ENCODE measurements at regions of chr3 and their contacts with region 1.

Region 1: DNA sequence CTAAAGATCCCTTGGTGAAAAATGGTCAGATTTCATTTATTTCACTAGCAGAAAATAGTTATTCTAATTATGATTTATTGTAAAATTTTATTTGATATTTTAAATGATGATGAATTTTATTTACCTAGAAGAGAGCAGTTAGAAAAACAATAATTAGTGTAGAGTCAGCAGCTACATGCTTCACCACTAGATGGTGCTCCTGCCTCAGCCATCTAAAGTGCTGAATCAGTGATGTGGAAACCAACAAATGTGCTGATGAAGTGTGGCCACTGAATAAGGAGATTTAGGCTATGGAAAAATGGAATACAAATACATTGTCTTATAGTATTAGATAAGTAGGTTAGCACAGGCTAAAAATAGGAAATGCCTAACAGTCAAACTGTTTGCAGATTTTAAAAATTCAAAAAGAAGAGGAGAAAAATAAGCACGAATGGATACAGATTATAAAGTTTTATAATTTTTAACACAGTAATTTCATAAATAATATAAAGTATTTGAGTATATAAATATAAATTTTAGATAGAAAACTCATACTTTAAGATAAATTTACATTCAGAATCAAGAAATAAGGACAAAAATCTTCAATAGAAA is 109.8 kb downstream of the PPP2R3A start:
- DNase-seq: peak; percentile 38 to 73 (median 65)
- ATAC-seq: peak; percentile 88
- H3K4me3 ChIP-seq: no peak overlapping the region
- H3K4me3 Mint-ChIP-seq: no peak overlapping the region
- H3K27ac ChIP-seq: no peak overlapping the region
- H3K27ac Mint-ChIP-seq: peak overlapping the region in 1 of 9 donors; percentile 28
- H3K4me1 ChIP-seq: no peaks in the 10 kb centered on the region
- H3K4me1 Mint-ChIP-seq: peaks cover 0 to 5% (median 4%) of the 10 kb centered on the region in 7 donors
- H3K27me3 ChIP-seq: no peaks in the 10 kb centered on the region
- H3K27me3 Mint-ChIP-seq: peaks cover 0 to 6% (median 0%) of the 10 kb centered on the region in 5 donors

Region 2: GRCh38 chr3:136162322-136162721 is 87.0 kb after region 1 on chr3:
- CTCF ChIA-PET with region 1: no interaction called
- POLR2A ChIA-PET with region 1: no interaction called
- intact Hi-C with region 1: no loop called
- DNase-seq: no peak
- ATAC-seq: no peak
- H3K4me3 ChIP-seq: no peak overlapping the region
- H3K4me3 Mint-ChIP-seq: peak overlapping the region in 1 of 10 donors; percentile 75
- H3K27ac ChIP-seq: no peak overlapping the region
- H3K27ac Mint-ChIP-seq: peak overlapping the region in 2 of 9 donors; percentile 51 to 60
- H3K4me1 ChIP-seq: peaks cover 35 to 38% of the 10 kb centered on the region in 2 donors
- H3K4me1 Mint-ChIP-seq: peaks cover 35 to 89% (median 78%) of the 10 kb centered on the region in 7 donors
- H3K27me3 ChIP-seq: no peaks in the 10 kb centered on the region
- H3K27me3 Mint-ChIP-seq: no peaks in the 10 kb centered on the region

Region 3: DNA sequence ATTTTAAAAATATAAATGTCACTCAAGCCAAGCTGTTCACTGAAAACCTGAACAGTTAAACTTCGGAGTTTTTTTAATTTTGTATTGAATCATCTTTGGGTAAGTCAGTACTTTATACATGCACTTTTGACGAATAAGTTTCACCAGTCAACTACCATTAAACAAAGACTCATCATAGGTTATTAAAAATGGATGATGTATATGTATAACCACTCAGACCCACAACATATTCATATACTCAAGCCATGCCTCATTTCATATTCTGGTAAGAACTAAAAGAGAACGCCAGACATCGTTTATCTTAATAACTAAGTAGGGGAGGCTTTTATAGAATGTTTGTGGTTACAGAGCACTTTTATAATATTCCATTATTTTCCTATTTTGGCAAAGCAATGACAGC is 102.6 kb after region 1 on chr3:
- CTCF ChIA-PET with region 1: interaction called, 3 read pairs
- POLR2A ChIA-PET with region 1: no interaction called
- intact Hi-C with region 1: loop called in 1 of 2 experiments (anchors 5 kb)
- DNase-seq: no peak
- ATAC-seq: no peak
- H3K4me3 ChIP-seq: no peak overlapping the region
- H3K4me3 Mint-ChIP-seq: peak overlapping the region in 5 of 10 donors; percentile 13 to 76 (median 53)
- H3K27ac ChIP-seq: no peak overlapping the region
- H3K27ac Mint-ChIP-seq: peak overlapping the region in 2 of 9 donors; percentile 14 to 24
- H3K4me1 ChIP-seq: peaks cover 47 to 68% of the 10 kb centered on the region in 2 donors
- H3K4me1 Mint-ChIP-seq: peaks cover 36 to 58% (median 48%) of the 10 kb centered on the region in 7 donors
- H3K27me3 ChIP-seq: no peaks in the 10 kb centered on the region
- H3K27me3 Mint-ChIP-seq: no peaks in the 10 kb centered on the region

Region 4: DNA sequence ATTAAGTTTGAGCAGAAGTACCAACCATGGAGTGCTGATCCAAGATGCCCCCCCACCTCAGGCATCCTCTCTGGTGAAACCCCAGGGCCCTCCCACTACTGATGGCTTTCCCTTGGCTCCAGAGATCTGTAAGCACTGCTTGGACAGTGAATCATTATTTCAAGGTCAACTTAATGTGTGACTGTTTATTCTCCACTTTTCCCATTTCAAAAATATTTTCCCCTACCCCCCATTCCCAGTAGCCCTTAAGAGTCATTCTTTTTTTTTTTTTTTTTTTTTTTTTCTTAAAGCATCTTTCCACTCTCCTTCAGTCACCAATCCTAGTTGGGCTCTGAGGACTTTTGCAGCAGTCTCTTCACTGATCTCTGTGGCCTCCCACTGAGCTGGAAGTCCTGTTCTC is 257.5 kb after region 1 on chr3:
- CTCF ChIA-PET with region 1: no interaction called
- POLR2A ChIA-PET with region 1: no interaction called
- intact Hi-C with region 1: loop called in 1 of 2 experiments (anchors 5 kb)
- DNase-seq: no peak
- ATAC-seq: no peak
- H3K4me3 ChIP-seq: no peak overlapping the region
- H3K4me3 Mint-ChIP-seq: no peak overlapping the region
- H3K27ac ChIP-seq: no peak overlapping the region
- H3K27ac Mint-ChIP-seq: peak overlapping the region in 6 of 9 donors; percentile 17 to 77 (median 46)
- H3K4me1 ChIP-seq: no peaks in the 10 kb centered on the region
- H3K4me1 Mint-ChIP-seq: peaks cover 0 to 4% (median 0%) of the 10 kb centered on the region in 7 donors
- H3K27me3 ChIP-seq: no peaks in the 10 kb centered on the region
- H3K27me3 Mint-ChIP-seq: no peaks in the 10 kb centered on the region

Region 5: DNA sequence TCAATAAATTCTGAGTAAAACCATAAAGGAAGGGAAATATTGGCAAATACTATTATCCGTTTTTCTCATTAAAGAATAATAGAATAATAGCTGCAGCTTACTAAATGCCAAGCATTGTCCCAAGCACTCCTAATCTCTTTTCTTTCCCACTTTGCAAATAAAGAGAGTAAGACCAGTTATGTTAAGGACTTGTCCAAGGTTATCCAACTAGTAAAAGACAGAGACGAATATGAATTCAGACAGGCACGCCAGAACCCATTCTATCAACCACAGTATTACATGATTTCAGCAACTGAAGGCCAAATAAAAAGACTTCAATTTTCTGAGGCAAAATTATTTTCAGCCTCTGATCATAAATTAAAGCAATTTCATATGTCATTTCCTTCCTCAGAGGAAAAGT is 441.3 kb after region 1 on chr3:
- CTCF ChIA-PET with region 1: no interaction called
- POLR2A ChIA-PET with region 1: no interaction called
- intact Hi-C with region 1: loop called in 1 of 2 experiments (anchors 5 kb)
- DNase-seq: no peak
- ATAC-seq: no peak
- H3K4me3 ChIP-seq: no peak overlapping the region
- H3K4me3 Mint-ChIP-seq: no peak overlapping the region
- H3K27ac ChIP-seq: no peak overlapping the region
- H3K27ac Mint-ChIP-seq: no peak overlapping the region
- H3K4me1 ChIP-seq: no peaks in the 10 kb centered on the region
- H3K4me1 Mint-ChIP-seq: peaks cover 3 to 8% (median 4%) of the 10 kb centered on the region in 7 donors
- H3K27me3 ChIP-seq: no peaks in the 10 kb centered on the region
- H3K27me3 Mint-ChIP-seq: no peaks in the 10 kb centered on the region

Region 6: GRCh38 chr3:136861890-136862616 is 786.7 kb after region 1 on chr3 and contains the start of gene NCK1:
- CTCF ChIA-PET with region 1: no interaction called
- POLR2A ChIA-PET with region 1: no interaction called
- intact Hi-C with region 1: loop called (anchors 1 to 5 kb)
- DNase-seq: peak; percentile 89 to 99 (median 98)
- ATAC-seq: peak; percentile 97
- H3K4me3 ChIP-seq: peak within 1 kb of the TSS; percentile 85
- H3K4me3 Mint-ChIP-seq: peak within 1 kb of the TSS; percentile 91 to 99 (median 94)
- H3K27ac ChIP-seq: peak within 1 kb of the TSS; percentile 93
- H3K27ac Mint-ChIP-seq: peak within 1 kb of the TSS; percentile 93 to 99 (median 97)
- H3K4me1 ChIP-seq: peaks cover 20 to 25% of the 10 kb centered on the region in 2 donors
- H3K4me1 Mint-ChIP-seq: peaks cover 32 to 74% (median 64%) of the 10 kb centered on the region in 7 donors
- H3K27me3 ChIP-seq: no peaks in the 10 kb centered on the region
- H3K27me3 Mint-ChIP-seq: no peaks in the 10 kb centered on the region
- total RNA-seq, gene NCK1: 41.1 to 59.6 (median 47.3) TPM

Region 7: GRCh38 chr3:137105277-137105977 is 1030.1 kb after region 1 on chr3:
- CTCF ChIA-PET with region 1: no interaction called
- POLR2A ChIA-PET with region 1: no interaction called
- intact Hi-C with region 1: loop called in 1 of 2 experiments (anchors 2 kb)
- DNase-seq: peak in 7 of 9 donors; percentile 10 to 56 (median 40)
- ATAC-seq: peak; percentile 67
- H3K4me3 ChIP-seq: no peak overlapping the region
- H3K4me3 Mint-ChIP-seq: no peak overlapping the region
- H3K27ac ChIP-seq: no peak overlapping the region
- H3K27ac Mint-ChIP-seq: no peak overlapping the region
- H3K4me1 ChIP-seq: no peaks in the 10 kb centered on the region
- H3K4me1 Mint-ChIP-seq: no peaks in the 10 kb centered on the region
- H3K27me3 ChIP-seq: no peaks in the 10 kb centered on the region
- H3K27me3 Mint-ChIP-seq: peaks cover 7 to 25% (median 17%) of the 10 kb centered on the region in 5 donors

Region 8: DNA sequence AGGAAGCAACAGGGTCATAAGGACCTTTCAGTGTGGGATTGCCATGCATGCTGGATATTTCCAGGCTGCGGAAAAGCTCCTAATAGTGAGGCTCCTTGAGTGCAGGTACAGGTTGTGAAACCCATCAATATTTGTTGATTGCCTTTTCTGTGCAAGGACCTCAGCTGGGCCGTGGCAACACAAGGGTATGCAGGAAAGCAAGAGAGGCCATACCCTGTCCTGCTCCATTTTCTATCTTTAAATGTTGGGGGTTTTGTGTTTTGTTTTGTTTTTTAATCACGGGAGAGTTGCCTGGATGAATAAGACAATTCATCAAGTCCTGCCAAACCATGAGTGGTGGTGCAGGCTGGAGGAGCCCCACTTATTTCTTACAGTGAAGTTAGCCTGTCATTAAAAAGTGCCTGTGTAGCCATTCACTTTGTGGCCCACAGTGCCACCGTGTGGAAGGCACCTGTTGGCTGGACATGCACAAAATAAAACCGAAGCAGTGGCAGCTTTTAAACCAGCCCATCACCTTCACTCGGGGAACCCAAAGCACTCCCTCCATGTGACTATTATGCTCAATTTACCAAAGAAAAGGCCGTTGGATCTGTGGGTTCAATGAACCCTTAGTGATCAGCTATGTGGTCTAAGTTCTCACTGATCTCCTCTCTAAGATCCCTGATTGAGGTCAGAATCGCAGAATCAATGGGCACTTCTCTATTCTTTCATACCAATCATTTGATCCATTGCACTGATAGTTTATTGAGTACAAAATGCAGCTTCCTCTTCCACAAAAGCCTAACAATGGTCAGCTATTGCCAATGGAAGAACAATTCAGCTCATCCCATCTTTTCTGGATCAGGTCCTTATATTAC is 1976.9 kb after region 1 on chr3:
- CTCF ChIA-PET with region 1: no interaction called
- POLR2A ChIA-PET with region 1: no interaction called
- intact Hi-C with region 1: loop called in 1 of 2 experiments (anchors 10 kb)
- DNase-seq: no peak
- ATAC-seq: no peak
- H3K4me3 ChIP-seq: no peak overlapping the region
- H3K4me3 Mint-ChIP-seq: no peak overlapping the region
- H3K27ac ChIP-seq: no peak overlapping the region
- H3K27ac Mint-ChIP-seq: no peak overlapping the region
- H3K4me1 ChIP-seq: no peaks in the 10 kb centered on the region
- H3K4me1 Mint-ChIP-seq: peaks cover 0 to 3% (median 0%) of the 10 kb centered on the region in 7 donors
- H3K27me3 ChIP-seq: peaks cover 0 to 3% of the 10 kb centered on the region in 2 donors
- H3K27me3 Mint-ChIP-seq: peaks cover 17 to 56% (median 40%) of the 10 kb centered on the region in 5 donors